ENCODE measurements at regions of chr1 and their contacts with region 1.

Region 1: GRCh38 chr1:234610348-234611152 is 572 bp upstream of the IRF2BP2 start:
- DNase-seq: peak; percentile 88 to 99 (median 92)

Region 2: DNA sequence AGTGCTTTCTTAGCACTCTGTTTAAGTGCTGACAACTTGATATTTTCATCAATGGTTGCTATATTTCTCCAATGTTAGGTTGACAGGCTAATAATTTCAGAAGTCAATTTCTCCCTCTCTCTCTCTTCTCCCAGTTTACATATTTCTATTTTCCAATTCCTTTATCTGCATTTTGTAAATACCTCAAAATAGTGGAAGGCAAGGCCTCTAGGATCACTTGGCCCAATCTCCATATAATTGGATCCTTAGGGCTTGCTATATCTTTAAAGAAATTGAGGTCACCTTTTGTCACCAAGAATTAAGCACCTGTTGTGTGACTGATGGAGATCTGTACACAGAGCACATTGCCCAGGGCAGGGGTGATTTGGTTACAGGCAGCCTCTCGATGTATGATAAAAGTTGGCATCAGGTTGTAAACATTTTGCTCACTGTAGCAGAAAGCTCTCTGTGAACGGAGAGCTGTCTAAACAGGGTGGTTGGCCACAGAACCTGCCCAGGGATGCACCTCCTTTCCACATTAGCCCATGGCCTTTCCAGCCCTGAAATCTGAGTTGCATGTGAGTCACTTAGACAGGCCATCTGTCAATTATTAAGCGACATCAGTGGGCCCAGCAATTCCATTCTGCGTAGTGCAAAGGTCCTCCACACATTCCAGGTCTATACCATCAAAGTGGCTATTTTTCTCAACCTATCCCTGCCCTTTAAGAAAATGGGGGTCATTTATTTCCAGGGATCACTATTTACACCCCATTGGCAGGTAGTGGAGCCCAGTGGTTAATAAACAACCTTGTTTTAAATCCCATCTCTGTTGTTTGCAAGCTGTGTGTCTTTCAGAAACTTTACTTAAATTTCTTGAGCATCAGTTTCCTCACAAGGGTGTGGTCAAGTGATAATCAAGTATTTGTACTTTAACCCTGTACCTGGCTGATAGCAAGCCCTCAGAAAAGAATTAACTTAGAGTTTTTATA is 28.6 kb after region 1 on chr1:
- intact Hi-C with region 1: no loop called
- DNase-seq: no peak

Region 3: GRCh38 chr1:234676103-234676594 is 65.6 kb after region 1 on chr1:
- intact Hi-C with region 1: loop called (anchors 5 kb)
- DNase-seq: peak; percentile 82 to 98 (median 93)

Region 4: DNA sequence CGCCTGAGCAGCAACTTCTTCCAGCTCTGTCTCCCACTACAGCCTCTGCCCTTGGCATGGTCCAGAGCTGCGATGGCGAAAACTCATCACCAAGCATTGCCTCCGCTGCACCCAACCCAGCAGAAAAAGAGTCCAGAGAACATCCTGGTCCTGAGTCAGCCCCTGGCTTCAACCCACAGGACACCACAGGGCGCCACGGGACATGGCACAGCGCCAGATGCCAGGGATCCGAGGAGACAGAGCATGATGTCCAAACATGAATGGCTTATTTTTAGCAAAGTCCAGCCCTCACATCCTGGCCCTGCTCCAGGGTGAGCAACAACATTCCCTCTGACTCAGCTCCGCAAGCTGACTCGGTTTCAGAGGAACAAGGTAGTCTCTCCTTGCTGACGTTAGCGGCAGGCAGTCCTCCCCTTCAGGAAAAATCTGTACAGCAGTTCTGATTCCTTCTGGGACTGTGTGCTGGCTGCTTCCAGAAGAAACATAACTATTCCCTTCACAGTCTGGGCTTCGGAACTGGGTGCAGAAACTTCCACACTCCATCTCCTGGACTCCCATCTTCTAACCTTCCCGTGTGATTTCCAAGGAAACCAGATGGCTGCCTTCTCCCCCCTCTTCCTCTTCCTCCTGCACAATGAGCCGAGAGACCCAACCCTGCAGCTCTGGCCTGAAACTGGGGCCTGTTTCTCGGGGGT is 386.8 kb after region 1 on chr1:
- intact Hi-C with region 1: loop called (anchors 10 kb)
- DNase-seq: peak; percentile 79 to 98 (median 94)

Region 5: DNA sequence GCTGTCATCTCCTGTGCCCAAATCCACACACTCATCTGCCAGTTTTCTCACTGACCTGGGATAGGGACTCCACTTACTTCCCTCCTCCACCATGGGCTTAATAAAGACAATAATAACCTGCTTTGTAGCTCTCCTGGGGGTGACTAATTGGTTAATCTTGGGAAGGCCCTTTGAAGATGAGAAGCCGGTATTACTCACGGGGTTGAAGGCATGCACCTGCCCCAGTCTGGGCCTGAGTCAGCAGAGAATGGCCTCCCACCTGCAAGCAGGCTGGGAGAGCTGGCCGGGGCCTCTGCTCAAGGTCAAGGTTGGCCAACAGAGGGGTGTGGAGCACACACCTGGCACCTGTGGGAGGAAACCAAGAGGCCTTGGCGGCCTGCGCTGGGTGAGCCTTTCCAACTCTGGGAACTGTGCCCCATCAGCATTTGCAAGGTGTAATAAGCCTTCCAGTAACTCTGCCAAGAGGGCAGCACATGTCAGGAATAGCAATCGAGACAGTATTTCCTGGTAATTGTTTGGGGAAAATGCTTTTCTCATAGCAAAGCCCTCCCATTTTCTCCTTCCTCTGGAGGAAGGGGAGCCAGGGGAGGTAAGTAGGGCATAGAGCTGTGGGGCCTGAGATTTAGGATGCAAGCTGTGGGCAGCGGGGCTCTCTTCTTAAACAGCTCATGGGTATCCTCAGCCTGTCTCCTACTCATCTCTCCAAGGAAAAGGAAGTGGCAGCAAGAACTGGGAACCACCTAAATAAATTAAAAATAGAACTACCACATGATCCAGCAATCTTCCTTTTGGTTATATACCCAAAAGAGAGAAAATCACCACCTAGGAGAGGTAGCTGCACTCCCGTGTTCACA is 469.1 kb after region 1 on chr1:
- intact Hi-C with region 1: loop called (anchors 5 kb)
- DNase-seq: peak in 2 of 10 donors; percentile 38 to 50